PC-9 (cell line): ENCODE measurements at regions of chr18 and their contacts with region 1.

Region 1: DNA sequence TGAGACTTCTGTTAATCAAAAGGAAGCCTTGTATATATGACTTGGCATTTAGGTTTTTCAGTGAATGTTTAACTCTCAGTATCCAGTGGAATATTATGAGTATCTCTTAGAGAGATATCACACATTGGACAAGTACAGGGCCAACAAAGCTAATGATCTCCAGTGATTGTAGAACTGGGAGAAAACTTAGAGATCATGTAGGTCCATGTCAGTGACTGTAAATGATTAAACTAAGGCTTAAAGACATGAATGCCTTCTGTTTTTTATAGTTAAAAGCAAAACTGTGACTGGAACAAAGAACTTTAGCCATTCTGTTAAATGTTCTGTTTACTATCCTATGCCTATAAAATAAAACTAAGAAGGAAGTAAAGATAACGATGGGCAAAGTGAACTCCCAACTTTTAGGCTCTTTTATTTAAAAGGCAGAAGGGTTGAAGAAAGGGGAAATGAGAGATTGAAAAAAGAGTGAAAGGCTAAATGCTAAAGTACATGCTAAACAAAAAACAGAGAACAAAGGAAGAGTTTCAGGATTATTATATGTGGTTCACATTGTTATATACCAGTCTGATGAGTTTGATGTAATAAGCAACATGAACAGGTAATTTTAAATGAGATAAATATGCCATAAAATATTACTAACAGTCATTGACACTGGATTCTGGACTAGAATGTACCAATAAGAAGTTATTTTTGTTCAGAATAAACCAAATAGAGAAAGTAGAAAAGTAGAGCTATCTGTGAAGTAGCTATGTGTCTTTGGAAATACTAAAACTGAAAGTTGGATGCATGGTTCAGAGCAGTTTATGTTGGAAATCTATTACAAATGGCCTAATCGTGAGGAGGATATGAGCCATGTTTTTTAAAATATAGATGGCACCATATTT is 37.1 kb upstream of the TNFRSF11A start:
- DNase-seq: no peak
- H3K4me3 ChIP-seq: no peak overlapping the region
- H3K27ac ChIP-seq: no peak overlapping the region
- H3K4me1 ChIP-seq: no peaks in the 10 kb centered on the region
- H3K27me3 ChIP-seq: no peaks in the 10 kb centered on the region
- CTCF ChIP-seq: no peak

Region 2: GRCh38 chr18:61589713-61590065 is 698.3 kb before region 1 on chr18:
- CTCF ChIA-PET with region 1: no interaction called
- POLR2A ChIA-PET with region 1: no interaction called
- intact Hi-C with region 1: no loop called
- DNase-seq: no peak
- H3K4me3 ChIP-seq: no peak overlapping the region
- H3K27ac ChIP-seq: no peak overlapping the region
- H3K4me1 ChIP-seq: no peaks in the 10 kb centered on the region
- H3K27me3 ChIP-seq: no peaks in the 10 kb centered on the region
- CTCF ChIP-seq: no peak

Region 3: GRCh38 chr18:62312851-62313250 is 24.8 kb after region 1 on chr18:
- CTCF ChIA-PET with region 1: no interaction called
- POLR2A ChIA-PET with region 1: interaction called, 11 read pairs
- intact Hi-C with region 1: no loop called
- DNase-seq: no peak
- H3K4me3 ChIP-seq: no peak overlapping the region
- H3K27ac ChIP-seq: no peak overlapping the region
- H3K4me1 ChIP-seq: no peaks in the 10 kb centered on the region
- H3K27me3 ChIP-seq: no peaks in the 10 kb centered on the region
- CTCF ChIP-seq: no peak